ENCODE measurements at regions of chr10 and their contacts with region 1.

Region 1: DNA sequence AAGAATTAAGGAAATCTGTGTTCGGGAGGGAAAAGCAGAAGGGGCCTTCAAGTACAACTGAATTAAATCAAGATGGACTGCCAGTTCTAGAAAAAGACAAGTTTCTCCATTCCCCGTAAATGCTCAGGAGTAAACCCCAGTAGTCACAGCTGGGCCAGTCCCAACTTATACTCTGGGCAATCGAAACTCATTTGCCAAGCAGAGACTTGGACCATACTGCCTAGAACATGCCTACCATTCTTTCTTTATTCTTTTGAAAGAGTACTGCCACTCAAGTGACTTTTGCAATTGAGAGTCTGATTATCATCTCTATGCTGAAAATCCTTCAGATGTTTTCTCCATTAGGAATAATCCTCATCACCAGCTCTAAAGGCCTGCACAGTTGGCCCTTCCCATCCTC is 21.4 kb downstream of the RPP30 start:
- DNase-seq: no peak
- H3K4me3 Mint-ChIP-seq: no peak overlapping the region
- H3K27ac Mint-ChIP-seq: no peak overlapping the region
- H3K4me1 Mint-ChIP-seq: peaks cover 12% of the 10 kb centered on the region
- H3K27me3 Mint-ChIP-seq: no peaks in the 10 kb centered on the region

Region 2: GRCh38 chr10:90871766-90872647 is 21.2 kb before region 1 on chr10 and contains the start of gene RPP30:
- CTCF ChIA-PET with region 1: interaction called, 3 read pairs
- POLR2A ChIA-PET with region 1: interaction called, 11 read pairs
- DNase-seq: peak; percentile 86
- H3K4me3 Mint-ChIP-seq: peak within 1 kb of the TSS; percentile 95
- H3K27ac Mint-ChIP-seq: peak within 1 kb of the TSS; percentile 83
- H3K4me1 Mint-ChIP-seq: peaks cover 33% of the 10 kb centered on the region
- H3K27me3 Mint-ChIP-seq: peaks cover 18% of the 10 kb centered on the region
- total RNA-seq, gene RPP30: 45.5 to 53.9 TPM